PC-9 (cell line): ENCODE measurements at regions of chr16 and their contacts with region 1.

Region 1: GRCh38 chr16:89670496-89671431 is 13.1 kb downstream of the SPATA33 start:
- DNase-seq: no peak
- H3K4me3 ChIP-seq: no peak overlapping the region
- H3K27ac ChIP-seq: no peak overlapping the region
- H3K4me1 ChIP-seq: 0 out of 2 replicates have a peak, but pooled peaks cover 4% of the 10 kb centered on the region
- H3K27me3 ChIP-seq: no peaks in the 10 kb centered on the region
- CTCF ChIP-seq: no peak

Region 2: DNA sequence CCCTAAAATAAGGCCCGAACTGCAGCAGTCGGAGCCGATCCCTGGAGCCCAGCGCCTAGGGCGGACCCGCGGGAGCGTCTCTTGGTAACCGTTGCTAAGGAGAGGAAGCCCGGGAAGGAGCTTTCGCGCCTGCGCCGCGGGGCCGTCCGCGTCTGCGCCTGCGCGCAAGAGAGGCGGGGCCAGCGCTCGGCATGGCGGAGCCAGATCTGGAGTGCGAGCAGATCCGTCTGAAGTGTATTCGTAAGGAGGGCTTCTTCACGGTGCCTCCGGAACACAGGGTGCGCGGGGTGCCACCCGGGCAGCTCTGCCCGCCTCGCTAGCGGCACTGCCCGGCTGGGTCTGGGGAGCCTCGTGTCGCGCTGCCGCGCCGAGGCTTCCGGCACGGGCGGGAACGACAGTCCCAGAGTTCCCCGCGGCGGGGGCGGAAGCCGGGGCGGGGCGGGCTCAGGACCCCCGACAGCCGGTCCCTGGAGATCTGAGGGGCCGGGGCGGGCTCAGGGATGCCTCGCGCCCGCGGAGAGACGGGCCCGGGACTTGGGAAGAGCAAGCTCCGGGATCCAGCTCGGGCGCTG is 15.8 kb after region 1 on chr16 and contains the start of gene CDK10:
- CTCF ChIA-PET with region 1: no interaction called
- POLR2A ChIA-PET with region 1: interaction called, 16 read pairs
- intact Hi-C with region 1: no loop called
- DNase-seq: peak; percentile 77 to 97
- H3K4me3 ChIP-seq: peak within 1 kb of the TSS; percentile 82
- H3K27ac ChIP-seq: peak within 1 kb of the TSS; percentile 40
- H3K4me1 ChIP-seq: peaks cover 11% of the 10 kb centered on the region
- H3K27me3 ChIP-seq: no peaks in the 10 kb centered on the region
- CTCF ChIP-seq: no peak
- total RNA-seq, gene CDK10: 76.6 and 110 TPM in 2 replicates

Region 3: DNA sequence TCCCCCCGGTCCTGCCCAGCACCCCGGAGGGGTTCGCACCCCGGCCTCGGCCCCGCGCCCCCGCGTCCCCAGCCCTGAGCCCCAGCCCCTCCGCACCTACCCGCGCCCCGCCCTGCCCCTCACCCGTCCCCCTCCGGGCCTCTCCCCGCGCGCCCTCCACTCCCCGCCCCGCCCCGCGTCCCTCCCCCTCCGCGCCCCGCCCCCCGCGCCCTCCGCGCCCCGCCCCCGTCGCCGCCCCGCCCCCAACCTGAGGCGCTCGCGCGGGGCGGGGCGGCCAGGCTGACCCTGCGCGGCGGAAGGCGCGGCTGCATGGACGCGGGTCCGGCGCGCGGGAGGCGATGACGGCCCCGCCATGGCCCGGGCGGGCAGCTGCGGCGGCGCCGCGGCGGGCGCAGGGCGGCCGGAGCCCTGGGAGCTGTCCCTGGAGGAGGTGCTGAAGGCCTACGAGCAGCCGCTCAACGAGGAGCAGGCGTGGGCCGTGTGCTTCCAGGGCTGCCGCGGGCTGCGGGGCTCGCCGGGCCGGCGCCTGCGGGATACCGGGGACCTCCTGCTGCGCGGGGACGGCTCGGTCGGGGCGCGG is 157.5 kb after region 1 on chr16 and contains the start of gene SPIRE2:
- CTCF ChIA-PET with region 1: no interaction called
- POLR2A ChIA-PET with region 1: no interaction called
- intact Hi-C with region 1: no loop called
- DNase-seq: peak; percentile 40 to 78
- H3K4me3 ChIP-seq: peak within 1 kb of the TSS; percentile 77
- H3K27ac ChIP-seq: no peak within 1 kb of the TSS
- H3K4me1 ChIP-seq: peaks cover 26% of the 10 kb centered on the region
- H3K27me3 ChIP-seq: no peaks in the 10 kb centered on the region
- CTCF ChIP-seq: no peak
- total RNA-seq, gene SPIRE2: 34.5 and 48.6 TPM in 2 replicates